Heart right ventricle (tissue), 16 donors: ENCODE measurements at regions of chr1 and their contacts with region 1.

Region 1: DNA sequence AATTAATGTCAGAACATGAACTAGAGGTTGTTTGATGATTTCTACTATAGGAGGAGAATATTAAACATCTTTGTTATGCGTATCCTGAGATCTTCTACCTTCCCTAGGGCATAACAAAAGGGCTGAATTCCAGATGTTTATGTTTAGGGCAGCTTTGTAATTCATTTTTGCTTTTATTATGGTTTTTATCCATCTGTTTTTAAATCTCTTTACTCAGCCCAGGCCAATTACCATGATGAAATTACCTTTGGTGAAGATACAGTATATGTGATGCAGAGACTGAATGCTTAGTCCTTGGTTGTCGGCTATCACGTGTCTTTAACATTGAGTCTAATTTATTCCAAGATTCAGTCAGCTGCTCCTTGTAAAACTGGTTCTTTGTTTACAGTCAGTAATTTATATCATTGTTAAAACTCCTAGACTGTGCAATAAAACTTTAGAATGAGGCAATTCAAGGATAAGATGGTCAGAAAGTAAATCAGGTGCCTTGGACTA is 176.9 kb downstream of the CTH start:
- DNase-seq: no peak
- ATAC-seq: no peak
- H3K4me3 ChIP-seq: no peak overlapping the region
- H3K27ac ChIP-seq: no peak overlapping the region
- H3K4me1 ChIP-seq: no peaks in the 10 kb centered on the region
- H3K27me3 ChIP-seq: no peaks in the 10 kb centered on the region
- CTCF ChIP-seq: no peak

Region 2: GRCh38 chr1:70546726-70547125 is 41.2 kb before region 1 on chr1:
- intact Hi-C with region 1: loop called in 1 of 10 experiments (anchors 5 kb)
- DNase-seq: no peak
- ATAC-seq: no peak
- H3K4me3 ChIP-seq: no peak overlapping the region
- H3K27ac ChIP-seq: no peak overlapping the region
- H3K4me1 ChIP-seq: no peaks in the 10 kb centered on the region
- H3K27me3 ChIP-seq: peaks cover 0 to 5% (median 0%) of the 10 kb centered on the region in 7 donors
- CTCF ChIP-seq: no peak